Activated CD4-positive, alpha-beta T cell treated with anti-CD3 and anti-CD28 coated beads, Interleukin-2, amount 10 ng/mL, durations not matched to agents 24 days and 14 days (primary cell): ENCODE measurements at regions of chr10 and their contacts with region 1.

Region 1: DNA sequence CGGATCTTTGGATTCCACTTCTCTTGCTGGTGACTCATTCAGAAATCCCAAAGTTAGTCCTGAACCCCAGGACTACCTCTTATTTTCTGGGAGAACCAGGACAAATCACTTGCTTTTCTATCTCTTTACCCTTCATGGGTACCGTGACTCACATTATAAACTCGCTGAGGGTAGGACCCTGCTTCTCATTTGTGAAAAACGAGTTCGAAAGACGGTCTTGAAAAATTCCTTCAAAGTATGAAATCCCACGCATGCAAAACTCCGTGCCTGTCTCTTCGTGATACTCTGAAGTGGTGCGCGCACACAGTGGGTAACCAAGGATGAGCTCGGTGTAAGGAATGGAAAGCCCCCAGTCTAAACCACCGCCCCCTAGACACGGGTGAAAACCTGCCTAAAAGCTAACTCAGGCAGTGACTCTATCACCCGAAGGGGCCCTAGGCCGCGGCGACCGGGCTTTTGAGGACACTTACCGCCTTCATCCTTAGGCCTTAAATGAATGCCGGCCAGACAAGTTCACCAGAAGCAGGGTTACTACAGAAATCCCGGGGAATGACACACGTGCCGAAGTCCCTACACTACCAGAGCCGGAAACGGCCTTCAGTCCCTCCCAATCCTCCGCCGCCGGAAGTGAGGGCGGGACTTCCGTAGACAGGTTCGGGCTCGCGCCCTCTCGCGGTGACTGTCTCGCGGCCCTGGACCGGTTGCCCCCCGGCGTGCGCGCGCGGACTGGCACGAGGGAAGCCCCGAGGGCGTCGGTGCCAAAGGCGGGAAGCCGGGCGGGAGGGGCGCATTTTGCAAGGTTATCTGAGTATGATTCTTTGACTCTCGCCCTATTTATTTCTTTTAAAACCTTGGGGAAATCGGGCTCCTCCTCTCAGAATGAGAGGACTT is at the start of gene NOC3L:
- DNase-seq: peak; percentile 99
- H3K4me3 Mint-ChIP-seq: peak within 1 kb of the TSS; percentile 97
- H3K27ac Mint-ChIP-seq: peak within 1 kb of the TSS; percentile 96
- H3K4me1 Mint-ChIP-seq: peaks cover 27% of the 10 kb centered on the region
- H3K27me3 Mint-ChIP-seq: peaks cover 14% of the 10 kb centered on the region
- total RNA-seq, gene NOC3L: 56.8 and 56.9 TPM in 2 replicates

Region 2: GRCh38 chr10:94320285-94320914 is 42.2 kb before region 1 on chr10:
- intact Hi-C with region 1: loop called (anchors 5 kb)
- DNase-seq: peak; percentile 88
- H3K4me3 Mint-ChIP-seq: no peak overlapping the region
- H3K27ac Mint-ChIP-seq: no peak overlapping the region
- H3K4me1 Mint-ChIP-seq: peaks cover 2% of the 10 kb centered on the region
- H3K27me3 Mint-ChIP-seq: no peaks in the 10 kb centered on the region

Region 3: GRCh38 chr10:94402015-94402842 is 39.6 kb after region 1 on chr10 and contains the start of gene TBC1D12:
- intact Hi-C with region 1: loop called (anchors 1 kb)
- DNase-seq: peak; percentile 78
- H3K4me3 Mint-ChIP-seq: peak within 1 kb of the TSS; percentile 82
- H3K27ac Mint-ChIP-seq: no peak within 1 kb of the TSS
- H3K4me1 Mint-ChIP-seq: peaks cover 5% of the 10 kb centered on the region
- H3K27me3 Mint-ChIP-seq: peaks cover 56% of the 10 kb centered on the region
- total RNA-seq, gene TBC1D12: 0.54 and 0.71 TPM in 2 replicates

Region 4: DNA sequence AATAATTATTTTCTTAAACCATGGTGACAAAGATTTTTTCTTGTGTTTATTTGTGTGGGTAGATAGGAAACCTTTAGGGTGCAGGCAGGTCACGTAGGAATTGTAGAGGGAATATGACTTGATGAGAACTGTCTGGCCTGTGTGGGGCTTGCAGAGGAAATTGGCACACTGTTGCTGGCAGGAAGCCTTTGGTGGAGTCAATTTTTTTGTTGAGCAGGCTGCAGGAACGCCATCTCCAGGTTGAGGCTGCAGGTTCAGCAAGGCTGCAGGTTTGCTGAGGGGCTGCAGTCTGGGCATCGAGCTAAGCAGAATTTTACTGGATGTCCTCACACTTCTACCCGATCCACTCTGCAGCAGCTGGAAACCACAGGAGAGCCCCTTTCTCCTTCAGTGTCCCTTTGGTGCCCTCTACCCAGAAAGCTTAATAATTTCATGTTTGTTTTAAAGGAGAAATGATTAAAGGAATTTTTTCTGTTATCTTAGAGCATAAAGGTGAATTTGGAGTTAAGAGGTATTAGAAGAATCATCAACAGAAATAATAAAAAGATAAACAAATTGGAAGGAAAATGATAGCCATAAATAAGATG is 76.8 kb after region 1 on chr10:
- intact Hi-C with region 1: loop called (anchors 5 kb)
- DNase-seq: no peak
- H3K4me3 Mint-ChIP-seq: no peak overlapping the region
- H3K27ac Mint-ChIP-seq: no peak overlapping the region
- H3K4me1 Mint-ChIP-seq: no peaks in the 10 kb centered on the region
- H3K27me3 Mint-ChIP-seq: peaks cover 3% of the 10 kb centered on the region

Region 5: GRCh38 chr10:94607111-94607510 is 244.5 kb after region 1 on chr10:
- intact Hi-C with region 1: loop called (anchors 5 kb)
- DNase-seq: peak; percentile 46
- H3K4me3 Mint-ChIP-seq: no peak overlapping the region
- H3K27ac Mint-ChIP-seq: peak overlapping the region; percentile 88
- H3K4me1 Mint-ChIP-seq: peaks cover 21% of the 10 kb centered on the region
- H3K27me3 Mint-ChIP-seq: no peaks in the 10 kb centered on the region